ENCODE measurements at regions of chr22 and their contacts with region 1.

Region 1: DNA sequence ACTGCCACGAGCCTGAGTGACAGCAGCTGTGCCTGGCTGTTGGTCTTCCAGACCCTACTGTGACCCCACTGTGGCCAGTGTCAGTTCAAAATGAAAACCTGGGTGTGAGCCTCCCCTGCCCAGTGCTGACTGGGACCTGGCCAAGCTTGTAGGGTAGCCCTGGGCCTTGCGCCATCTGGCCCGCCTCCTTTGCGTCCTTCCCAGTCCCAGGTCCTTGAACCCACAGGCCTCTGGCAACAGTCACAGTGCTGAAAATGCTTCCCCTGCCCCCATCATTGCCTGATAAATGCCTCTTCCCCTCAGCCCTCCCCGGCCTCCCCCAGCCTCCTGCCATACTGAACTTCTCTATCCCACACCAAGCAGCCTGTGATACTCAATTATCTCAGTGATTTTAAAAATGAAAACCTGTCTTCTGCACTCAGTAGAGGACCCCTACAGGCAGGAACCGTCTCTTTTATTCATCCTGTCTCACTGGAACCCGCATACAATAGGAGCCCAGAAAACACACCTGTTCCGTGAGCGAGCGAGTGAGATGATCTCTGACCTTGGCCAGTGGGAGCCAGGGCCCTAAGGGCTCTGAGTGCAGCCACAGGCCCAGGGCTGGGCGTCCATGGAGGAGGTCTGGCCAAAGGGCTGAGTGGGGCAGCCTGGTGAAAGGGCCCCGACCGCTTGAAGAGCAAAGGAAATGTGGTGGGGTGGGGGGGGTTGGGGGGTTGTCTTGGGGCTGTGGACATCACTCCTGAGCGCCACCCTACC is 49.7 kb upstream of the TTLL12 start:
- DNase-seq: peak; percentile 84
- H3K4me3 ChIP-seq: no peak overlapping the region
- H3K27ac ChIP-seq: peak overlapping the region in 5 of 8 donors; percentile 14 to 73 (median 63)
- H3K4me1 ChIP-seq: peaks cover 4 to 72% (median 31%) of the 10 kb centered on the region in 6 donors
- H3K27me3 ChIP-seq: peaks cover 0 to 5% (median 0%) of the 10 kb centered on the region in 7 donors
- CTCF ChIP-seq: no peak
- POLR2A ChIP-seq: no peak

Region 2: DNA sequence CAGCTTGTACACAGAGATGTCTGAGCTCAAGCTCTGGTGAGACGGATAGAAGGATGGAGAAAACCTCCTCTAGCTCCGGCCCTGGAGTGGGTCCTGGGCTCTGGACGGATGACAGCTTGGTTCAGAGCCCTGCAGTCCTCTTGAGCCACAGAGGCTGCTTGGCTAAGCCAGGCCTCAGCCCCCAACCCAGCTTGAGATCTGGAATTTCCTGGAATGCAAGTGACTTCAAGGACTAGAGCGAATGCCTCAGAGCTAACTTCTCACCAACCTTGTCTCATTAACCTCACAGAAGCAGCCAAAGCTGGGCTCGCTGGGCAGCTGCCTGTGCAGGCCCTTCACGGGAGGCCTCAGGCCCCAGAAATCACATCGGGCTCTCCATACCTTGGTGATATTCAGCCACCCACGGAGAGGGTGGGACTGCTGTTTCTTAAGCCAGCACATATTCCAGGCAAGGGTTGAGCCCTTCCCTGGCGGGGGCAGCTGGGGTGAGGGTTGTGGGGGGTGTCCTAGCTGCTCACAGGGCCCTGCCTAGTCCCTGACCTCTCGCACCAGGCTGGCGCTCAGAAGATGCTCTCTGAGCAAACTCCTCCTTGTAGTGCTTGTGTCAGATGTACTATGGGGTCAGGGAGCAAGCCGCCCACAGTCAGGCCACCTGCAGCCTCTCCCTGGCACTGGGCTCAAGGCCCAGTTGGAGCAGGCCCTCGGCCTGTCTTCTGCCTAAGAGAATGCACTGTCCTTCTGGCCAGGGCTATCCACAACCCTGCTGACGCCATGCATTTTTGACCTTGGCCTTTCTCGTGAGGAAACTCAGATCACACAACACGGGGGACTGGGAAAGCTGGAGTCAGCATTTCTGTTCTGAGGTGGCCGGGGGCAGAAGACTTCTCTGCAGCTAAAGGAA is 24.0 kb after region 1 on chr22:
- intact Hi-C with region 1: loop called (anchors 2 kb)
- DNase-seq: no peak
- H3K4me3 ChIP-seq: no peak overlapping the region
- H3K27ac ChIP-seq: peak overlapping the region in 5 of 8 donors; percentile 16 to 61 (median 35)
- H3K4me1 ChIP-seq: peaks cover 29 to 84% (median 44%) of the 10 kb centered on the region in 6 donors
- H3K27me3 ChIP-seq: peaks cover 0 to 54% (median 0%) of the 10 kb centered on the region in 7 donors
- CTCF ChIP-seq: no peak
- POLR2A ChIP-seq: no peak

Region 3: DNA sequence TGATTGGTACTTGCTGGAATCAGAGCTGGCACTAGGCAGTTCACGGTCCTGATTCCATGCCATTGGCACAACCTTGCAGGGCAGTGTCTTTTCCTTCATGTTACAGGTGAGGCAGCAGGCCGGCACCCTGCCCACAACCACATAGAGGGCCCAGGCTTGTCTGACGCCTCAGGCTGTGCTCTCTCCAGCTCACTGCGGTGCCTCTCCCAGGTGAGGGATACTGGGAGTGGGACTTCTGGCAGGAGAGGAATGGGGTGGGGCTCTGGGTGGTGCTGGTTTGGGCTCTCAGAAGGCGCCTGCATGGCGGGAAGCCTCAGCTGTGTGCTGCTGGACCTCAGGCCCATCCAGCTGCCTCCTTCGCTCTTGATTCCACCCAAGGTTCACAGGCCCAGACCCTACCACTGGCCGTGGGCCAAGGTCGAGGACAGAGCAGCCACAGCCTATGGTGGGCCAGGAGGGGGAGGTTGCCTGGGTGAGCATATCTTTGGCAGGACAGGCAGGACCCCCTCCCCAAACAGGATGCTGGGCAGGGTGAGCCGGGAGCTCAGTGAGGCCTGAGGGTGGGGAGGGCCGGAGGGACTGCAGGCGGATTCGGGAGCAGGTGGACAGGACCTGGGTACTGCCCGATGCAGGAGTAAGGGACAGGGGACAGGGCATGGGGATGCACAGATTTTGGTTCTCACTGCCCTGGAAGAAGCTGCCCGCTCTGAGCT is 168.2 kb after region 1 on chr22:
- intact Hi-C with region 1: no loop called
- DNase-seq: peak; percentile 63
- H3K4me3 ChIP-seq: no peak overlapping the region
- H3K27ac ChIP-seq: no peak overlapping the region
- H3K4me1 ChIP-seq: no peaks in the 10 kb centered on the region
- H3K27me3 ChIP-seq: peaks cover 0 to 58% (median 2%) of the 10 kb centered on the region in 7 donors
- CTCF ChIP-seq: no peak
- POLR2A ChIP-seq: no peak

Measured in spleen (tissue), 13 donors.